CD4-positive, alpha-beta memory T cell (primary cell): ENCODE measurements at regions of chr4 and their contacts with region 1.

Region 1: GRCh38 chr4:17614416-17615299 is at the start of gene MED28:
- DNase-seq: peak; percentile 92 to 96 (median 94)
- H3K4me3 ChIP-seq: peak within 1 kb of the TSS; percentile 82 to 100
- H3K4me3 Mint-ChIP-seq: peak within 1 kb of the TSS; percentile 95 to 100 (median 99)
- H3K27ac ChIP-seq: peak within 1 kb of the TSS; percentile 95
- H3K27ac Mint-ChIP-seq: peak within 1 kb of the TSS; percentile 95 to 100 (median 96)
- H3K4me1 ChIP-seq: peaks cover 45% of the 10 kb centered on the region
- H3K4me1 Mint-ChIP-seq: peaks cover 25 to 61% (median 44%) of the 10 kb centered on the region in 4 donors
- H3K27me3 ChIP-seq: no peaks in the 10 kb centered on the region
- H3K27me3 Mint-ChIP-seq: no peaks in the 10 kb centered on the region
- total RNA-seq, gene MED28: 85.4 to 87.0 TPM

Region 2: GRCh38 chr4:16659079-16659478 is 955.6 kb before region 1 on chr4:
- CTCF ChIA-PET with region 1: no interaction called
- POLR2A ChIA-PET with region 1: no interaction called
- intact Hi-C with region 1: no loop called
- DNase-seq: no peak
- H3K4me3 ChIP-seq: no peak overlapping the region
- H3K4me3 Mint-ChIP-seq: no peak overlapping the region
- H3K27ac ChIP-seq: no peak overlapping the region
- H3K27ac Mint-ChIP-seq: no peak overlapping the region
- H3K4me1 ChIP-seq: no peaks in the 10 kb centered on the region
- H3K4me1 Mint-ChIP-seq: no peaks in the 10 kb centered on the region
- H3K27me3 ChIP-seq: no peaks in the 10 kb centered on the region
- H3K27me3 Mint-ChIP-seq: no peaks in the 10 kb centered on the region

Region 3: GRCh38 chr4:17511950-17512795 is 102.5 kb before region 1 on chr4 and contains the start of gene QDPR:
- CTCF ChIA-PET with region 1: no interaction called
- POLR2A ChIA-PET with region 1: interaction called, 8 read pairs
- intact Hi-C with region 1: loop called (anchors 5 kb)
- DNase-seq: peak; percentile 60 to 70 (median 70)
- H3K4me3 ChIP-seq: peak within 1 kb of the TSS; percentile 38 to 75
- H3K4me3 Mint-ChIP-seq: peak within 1 kb of the TSS; percentile 96 to 100 (median 98)
- H3K27ac ChIP-seq: peak within 1 kb of the TSS; percentile 46
- H3K27ac Mint-ChIP-seq: peak within 1 kb of the TSS; percentile 74 to 96 (median 91)
- H3K4me1 ChIP-seq: peaks cover 28% of the 10 kb centered on the region
- H3K4me1 Mint-ChIP-seq: peaks cover 23 to 32% (median 30%) of the 10 kb centered on the region in 4 donors
- H3K27me3 ChIP-seq: no peaks in the 10 kb centered on the region
- H3K27me3 Mint-ChIP-seq: peaks cover 9% of the 10 kb centered on the region in 2 donors
- total RNA-seq, gene QDPR: 21.8 to 24.4 TPM

Region 4: GRCh38 chr4:17636696-17637622 is 22.3 kb after region 1 on chr4:
- CTCF ChIA-PET with region 1: interaction called, 4 read pairs
- POLR2A ChIA-PET with region 1: interaction called, 6 read pairs
- intact Hi-C with region 1: loop called (anchors 2 kb)
- DNase-seq: peak; percentile 49 to 64 (median 59)
- H3K4me3 ChIP-seq: no peak overlapping the region
- H3K4me3 Mint-ChIP-seq: no peak overlapping the region
- H3K27ac ChIP-seq: no peak overlapping the region
- H3K27ac Mint-ChIP-seq: peak overlapping the region in 4 of 7 donors; percentile 7 to 56 (median 34)
- H3K4me1 ChIP-seq: no peaks in the 10 kb centered on the region
- H3K4me1 Mint-ChIP-seq: peaks cover 0 to 5% (median under 1%) of the 10 kb centered on the region in 4 donors
- H3K27me3 ChIP-seq: no peaks in the 10 kb centered on the region
- H3K27me3 Mint-ChIP-seq: no peaks in the 10 kb centered on the region

Region 5: DNA sequence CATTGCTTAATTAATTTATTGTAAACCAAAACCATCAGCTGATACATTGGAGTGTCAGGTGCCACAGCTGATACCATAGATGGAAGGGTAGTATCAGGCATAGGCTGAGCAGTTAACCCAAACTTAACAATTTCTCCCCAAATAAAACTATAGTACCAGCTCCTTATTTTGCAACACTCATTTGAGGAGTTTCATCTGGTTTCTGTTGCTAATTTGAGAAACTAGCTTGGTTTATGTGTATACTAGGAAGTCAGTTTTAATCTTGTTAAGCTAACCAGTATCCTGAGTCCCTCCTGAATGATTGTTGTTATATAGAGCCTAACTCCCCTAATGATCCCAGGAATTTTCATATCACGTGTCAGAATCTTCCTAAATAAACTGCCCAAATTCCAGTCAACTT is 183.2 kb after region 1 on chr4:
- CTCF ChIA-PET with region 1: no interaction called
- POLR2A ChIA-PET with region 1: no interaction called
- intact Hi-C with region 1: no loop called
- DNase-seq: no peak
- H3K4me3 ChIP-seq: no peak overlapping the region
- H3K4me3 Mint-ChIP-seq: no peak overlapping the region
- H3K27ac ChIP-seq: no peak overlapping the region
- H3K27ac Mint-ChIP-seq: peak overlapping the region in 1 of 7 donors; percentile 38
- H3K4me1 ChIP-seq: no peaks in the 10 kb centered on the region
- H3K4me1 Mint-ChIP-seq: peaks cover 6 to 9% (median 7%) of the 10 kb centered on the region in 4 donors
- H3K27me3 ChIP-seq: no peaks in the 10 kb centered on the region
- H3K27me3 Mint-ChIP-seq: no peaks in the 10 kb centered on the region